Panc1 (cell line): ENCODE measurements at regions of chr1 and their contacts with region 1.

Region 1: GRCh38 chr1:174022080-174022975 is at the start of gene RC3H1:
- DNase-seq: no peak
- ATAC-seq: peak; percentile 95
- H3K4me3 ChIP-seq: peak within 1 kb of the TSS; percentile 83 to 92
- H3K27ac ChIP-seq: peak within 1 kb of the TSS; percentile 99
- H3K4me1 ChIP-seq: peaks cover 33% of the 10 kb centered on the region
- H3K27me3 ChIP-seq: no peaks in the 10 kb centered on the region
- CTCF ChIP-seq: no peak
- total RNA-seq, gene RC3H1: 21.4 TPM

Region 2: GRCh38 chr1:173954179-173954578 is 68.1 kb before region 1 on chr1:
- CTCF ChIA-PET with region 1: no interaction called
- POLR2A ChIA-PET with region 1: no interaction called
- in situ Hi-C with region 1: no loop called
- intact Hi-C with region 1: no loop called
- DNase-seq: no peak
- ATAC-seq: no peak
- H3K4me3 ChIP-seq: no peak overlapping the region
- H3K27ac ChIP-seq: no peak overlapping the region
- H3K4me1 ChIP-seq: no peaks in the 10 kb centered on the region
- H3K27me3 ChIP-seq: no peaks in the 10 kb centered on the region
- CTCF ChIP-seq: no peak

Region 3: DNA sequence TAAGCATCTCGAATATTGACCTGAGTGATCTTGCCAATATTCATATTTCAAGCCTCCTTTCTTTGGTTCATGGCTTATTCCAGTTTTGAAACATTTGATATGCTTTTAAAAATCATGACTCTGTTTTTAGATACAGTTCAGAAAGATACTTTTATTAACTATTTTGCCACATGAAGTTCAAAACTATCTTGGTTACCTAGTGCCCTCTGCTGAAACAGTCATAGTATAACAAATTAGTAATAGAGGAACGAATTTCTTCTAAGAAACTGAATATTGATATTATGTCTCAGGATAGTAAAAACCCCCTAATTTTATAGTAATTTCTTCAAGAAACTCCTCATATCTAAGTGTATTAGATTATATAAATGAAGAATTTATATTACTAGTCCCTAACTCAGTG is 52.4 kb after region 1 on chr1:
- CTCF ChIA-PET with region 1: no interaction called
- POLR2A ChIA-PET with region 1: interaction called, 18 read pairs
- in situ Hi-C with region 1: no loop called
- intact Hi-C with region 1: no loop called
- DNase-seq: no peak
- ATAC-seq: no peak
- H3K4me3 ChIP-seq: no peak overlapping the region
- H3K27ac ChIP-seq: no peak overlapping the region
- H3K4me1 ChIP-seq: no peaks in the 10 kb centered on the region
- H3K27me3 ChIP-seq: 0 out of 2 replicates have a peak, but pooled peaks cover 2% of the 10 kb centered on the region
- CTCF ChIP-seq: peak; percentile 42; the same call in 1 of the 2 replicates